ENCODE measurements at regions of chr18 and their contacts with region 1.

Region 1: DNA sequence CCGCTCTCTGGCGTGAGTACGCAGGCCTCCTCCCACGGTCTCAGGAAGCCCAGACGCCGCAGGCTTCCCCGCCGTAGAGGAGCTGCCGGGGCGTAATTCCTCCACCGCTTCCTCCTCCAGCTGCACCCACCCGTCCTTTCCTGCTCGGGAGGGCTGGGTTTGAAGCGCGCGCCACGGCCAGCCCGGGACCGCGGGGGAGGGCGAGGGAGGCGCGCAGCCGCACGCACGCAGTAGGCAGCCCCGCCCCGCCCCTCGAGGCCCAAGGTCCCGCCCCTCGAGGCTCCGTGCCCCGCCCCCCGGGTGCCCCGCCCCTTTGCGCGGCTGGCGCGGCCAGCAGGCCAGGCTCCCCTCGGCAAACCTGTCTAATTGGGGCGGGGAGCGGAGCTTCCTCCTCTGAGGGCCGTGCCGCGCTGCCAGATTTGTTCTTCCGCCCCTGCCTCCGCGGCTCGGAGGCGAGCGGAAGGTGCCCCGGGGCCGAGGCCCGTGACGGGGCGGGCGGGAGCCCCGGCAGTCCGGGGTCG is at the start of gene MALT1:
- DNase-seq: peak; percentile 96
- H3K4me3 ChIP-seq: peak within 1 kb of the TSS; percentile 42 to 83 (median 70)
- H3K27ac ChIP-seq: peak within 1 kb of the TSS; percentile 91 to 98 (median 95)
- H3K4me1 ChIP-seq: peaks cover 0 to 22% (median 16%) of the 10 kb centered on the region in 4 donors
- H3K27me3 ChIP-seq: no peaks in the 10 kb centered on the region
- CTCF ChIP-seq: no peak
- EP300 ChIP-seq: no peak
- POLR2A ChIP-seq: peak in 1 of 2 donors; percentile 52
- total RNA-seq, gene MALT1: 17.1 to 22.4 (median 18.4) TPM

Region 2: GRCh38 chr18:58180738-58181353 is 490.3 kb before region 1 on chr18:
- intact Hi-C with region 1: loop called (anchors 10 kb)
- DNase-seq: no peak
- H3K4me3 ChIP-seq: no peak overlapping the region
- H3K27ac ChIP-seq: no peak overlapping the region
- H3K4me1 ChIP-seq: peaks cover 0 to 56% (median 39%) of the 10 kb centered on the region in 4 donors
- H3K27me3 ChIP-seq: no peaks in the 10 kb centered on the region
- CTCF ChIP-seq: peak; percentile 65 to 87 (median 76)
- EP300 ChIP-seq: no peak
- POLR2A ChIP-seq: no peak

Region 3: GRCh38 chr18:58529714-58530354 is 141.3 kb before region 1 on chr18:
- intact Hi-C with region 1: loop called (anchors 2 kb)
- DNase-seq: no peak
- H3K4me3 ChIP-seq: no peak overlapping the region
- H3K27ac ChIP-seq: no peak overlapping the region
- H3K4me1 ChIP-seq: no peaks in the 10 kb centered on the region
- H3K27me3 ChIP-seq: no peaks in the 10 kb centered on the region
- CTCF ChIP-seq: peak; percentile 51 to 80 (median 78)
- EP300 ChIP-seq: no peak
- POLR2A ChIP-seq: no peak

Region 4: DNA sequence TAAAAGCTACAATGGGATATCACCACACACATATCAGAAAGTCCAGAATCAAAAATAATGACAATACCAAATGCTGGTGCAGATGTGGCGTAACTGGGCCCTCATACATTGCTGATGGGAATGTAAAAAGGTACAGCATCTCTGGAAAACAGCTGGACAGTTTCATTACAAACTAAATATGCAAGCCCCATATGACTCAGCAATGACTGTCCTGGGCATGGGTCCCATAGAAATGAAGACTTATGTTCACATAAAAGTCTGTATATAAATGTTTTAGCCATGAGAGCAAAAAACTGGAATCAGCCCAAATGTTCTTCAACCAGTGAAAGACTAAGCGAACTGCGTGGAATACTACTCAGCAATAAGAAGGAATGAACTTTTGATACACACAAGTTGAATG is 99.0 kb before region 1 on chr18:
- intact Hi-C with region 1: loop called (anchors 5 kb)
- DNase-seq: peak; percentile 85
- H3K4me3 ChIP-seq: no peak overlapping the region
- H3K27ac ChIP-seq: peak overlapping the region in 2 of 4 donors; percentile 37 to 74
- H3K4me1 ChIP-seq: peaks cover 0 to 26% (median 13%) of the 10 kb centered on the region in 4 donors
- H3K27me3 ChIP-seq: no peaks in the 10 kb centered on the region
- CTCF ChIP-seq: no peak
- EP300 ChIP-seq: peak in 3 of 4 donors; percentile 51 to 83 (median 75)
- POLR2A ChIP-seq: no peak

Region 5: GRCh38 chr18:58635891-58636290 is 35.3 kb before region 1 on chr18:
- intact Hi-C with region 1: no loop called
- DNase-seq: no peak
- H3K4me3 ChIP-seq: no peak overlapping the region
- H3K27ac ChIP-seq: no peak overlapping the region
- H3K4me1 ChIP-seq: peaks cover 0 to 4% (median 0%) of the 10 kb centered on the region in 4 donors
- H3K27me3 ChIP-seq: no peaks in the 10 kb centered on the region
- CTCF ChIP-seq: no peak
- EP300 ChIP-seq: no peak
- POLR2A ChIP-seq: no peak

Region 6: DNA sequence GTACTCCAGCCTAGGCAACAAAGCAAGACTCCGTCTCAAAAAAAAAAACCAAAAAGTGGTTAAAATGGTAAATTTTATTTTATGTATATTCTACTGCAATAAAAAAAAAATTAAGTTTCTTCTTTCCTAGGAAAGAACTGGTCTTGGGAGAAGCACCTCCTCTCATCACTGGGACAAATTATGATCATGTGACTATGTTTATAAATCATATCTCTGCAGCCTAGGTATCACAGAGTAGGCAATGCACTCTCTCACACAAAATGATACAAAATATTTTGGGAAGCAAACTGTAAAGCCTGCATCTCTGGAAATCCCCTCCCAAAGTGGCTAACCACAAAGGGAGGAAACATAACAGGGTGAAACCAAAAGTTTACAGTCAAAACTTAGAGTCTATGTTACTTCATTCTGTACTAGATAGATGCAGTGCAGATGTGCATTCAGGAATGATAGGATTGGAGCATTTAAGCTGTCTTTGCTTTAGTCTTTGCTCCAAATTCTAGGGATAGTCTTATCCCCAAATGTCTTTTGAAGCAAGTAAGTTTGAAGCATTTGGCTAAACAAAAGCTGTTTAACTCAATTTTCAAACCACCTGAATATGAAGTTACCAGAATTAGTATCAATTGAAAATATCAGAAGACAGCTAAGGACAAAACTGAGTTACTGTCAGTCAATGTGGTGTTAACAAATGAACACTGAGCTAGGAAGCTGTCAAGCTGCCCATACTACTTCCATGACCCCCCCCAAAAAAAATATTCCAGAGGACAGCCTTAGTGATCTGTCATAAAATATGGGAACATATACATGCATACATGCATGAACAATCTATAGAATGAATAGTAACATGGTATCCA is 21.0 kb before region 1 on chr18:
- intact Hi-C with region 1: no loop called
- DNase-seq: no peak
- H3K4me3 ChIP-seq: no peak overlapping the region
- H3K27ac ChIP-seq: no peak overlapping the region
- H3K4me1 ChIP-seq: no peaks in the 10 kb centered on the region
- H3K27me3 ChIP-seq: no peaks in the 10 kb centered on the region
- CTCF ChIP-seq: no peak
- EP300 ChIP-seq: no peak
- POLR2A ChIP-seq: no peak

Region 7: DNA sequence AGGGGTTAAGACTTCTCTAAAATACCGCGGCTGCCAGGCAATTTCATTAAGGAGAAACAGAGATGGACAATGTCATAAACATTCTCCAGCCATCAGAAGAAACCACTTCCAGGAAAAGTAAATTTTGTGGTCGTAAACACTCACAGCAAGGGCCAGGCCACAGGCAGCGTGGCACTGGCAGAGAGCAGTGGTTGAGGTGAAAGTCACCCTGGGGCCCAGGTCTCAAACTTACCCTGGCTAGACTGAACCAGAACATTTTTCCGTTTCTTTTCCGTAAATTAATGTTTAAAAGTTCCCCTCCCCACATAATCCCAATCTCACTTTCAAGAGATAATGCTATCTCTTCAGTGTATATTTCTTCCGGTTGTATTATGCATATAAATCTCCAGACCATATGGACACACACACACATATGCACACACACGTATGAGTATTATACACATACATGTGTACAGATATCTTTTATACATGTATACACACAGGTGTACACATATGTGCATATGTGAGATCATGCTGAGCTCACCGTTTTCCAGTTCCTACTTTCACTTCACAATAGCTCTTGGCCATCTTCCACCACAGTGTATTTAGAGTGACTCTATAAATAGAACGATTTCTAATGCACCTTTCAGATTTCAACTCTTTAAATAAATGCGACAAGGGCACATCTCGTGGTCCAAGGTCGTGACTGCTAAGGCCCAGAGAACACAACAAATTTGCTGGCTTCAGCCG is 90.2 kb after region 1 on chr18:
- intact Hi-C with region 1: loop called (anchors 5 kb)
- DNase-seq: no peak
- H3K4me3 ChIP-seq: no peak overlapping the region
- H3K27ac ChIP-seq: no peak overlapping the region
- H3K4me1 ChIP-seq: no peaks in the 10 kb centered on the region
- H3K27me3 ChIP-seq: peaks cover 0 to 20% (median 0%) of the 10 kb centered on the region in 3 donors
- CTCF ChIP-seq: no peak
- EP300 ChIP-seq: no peak
- POLR2A ChIP-seq: no peak

Region 8: GRCh38 chr18:58864146-58865032 is 193.2 kb after region 1 on chr18 and contains the start of gene ZNF532:
- intact Hi-C with region 1: loop called (anchors 5 kb)
- DNase-seq: peak; percentile 67
- H3K4me3 ChIP-seq: peak within 1 kb of the TSS; percentile 34 to 66 (median 51)
- H3K27ac ChIP-seq: peak within 1 kb of the TSS; percentile 87 to 96 (median 92)
- H3K4me1 ChIP-seq: peaks cover 0 to 81% (median 75%) of the 10 kb centered on the region in 4 donors
- H3K27me3 ChIP-seq: no peaks in the 10 kb centered on the region
- CTCF ChIP-seq: no peak
- EP300 ChIP-seq: no peak
- POLR2A ChIP-seq: no peak
- total RNA-seq, gene ZNF532: 71.0 to 104 (median 78.8) TPM